ENCODE measurements at regions of chr20 and their contacts with region 1.

Region 1: DNA sequence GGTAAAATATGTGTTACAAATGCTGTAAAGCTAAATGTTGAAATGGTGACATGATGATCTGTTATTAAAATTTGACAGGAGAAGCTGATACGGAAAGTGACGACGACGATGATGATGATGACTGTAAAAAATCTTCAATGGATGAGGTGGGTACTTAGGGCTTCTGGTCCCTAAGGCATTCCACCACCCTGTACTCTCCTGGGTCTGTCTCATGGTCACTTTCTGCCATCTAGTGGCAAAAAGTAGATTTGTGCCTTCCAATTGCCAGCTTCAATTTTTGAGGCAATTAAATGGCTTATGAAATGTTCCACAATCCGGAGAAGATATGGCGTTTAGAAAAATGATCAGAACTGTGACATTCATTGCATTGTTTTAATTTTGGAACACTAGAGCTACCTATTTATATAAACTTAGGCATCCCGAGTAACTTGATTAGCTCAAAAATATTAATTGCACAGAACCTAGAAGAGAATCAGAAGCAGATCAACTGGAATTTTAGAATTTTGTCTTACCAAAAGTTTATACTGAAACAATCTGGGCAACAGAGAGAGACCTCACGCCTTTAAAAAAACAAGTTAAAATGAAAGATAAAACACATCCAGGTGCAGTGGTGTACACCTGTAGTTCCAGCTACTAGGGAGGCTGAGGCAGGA is 346.5 kb upstream of the PLCB4 start:
- DNase-seq: peak; percentile 22
- ATAC-seq: peak; percentile 86
- H3K4me3 Mint-ChIP-seq: no peak overlapping the region
- H3K27ac Mint-ChIP-seq: no peak overlapping the region
- H3K4me1 Mint-ChIP-seq: no peaks in the 10 kb centered on the region
- H3K27me3 Mint-ChIP-seq: no peaks in the 10 kb centered on the region
- CTCF ChIP-seq: peak; percentile 69

Region 2: GRCh38 chr20:7935027-7935551 is 787.3 kb before region 1 on chr20:
- CTCF ChIA-PET with region 1: interaction called, 37 read pairs
- POLR2A ChIA-PET with region 1: interaction called, 6 read pairs
- DNase-seq: no peak
- ATAC-seq: no peak
- H3K4me3 Mint-ChIP-seq: no peak overlapping the region
- H3K27ac Mint-ChIP-seq: no peak overlapping the region
- H3K4me1 Mint-ChIP-seq: peaks cover 4% of the 10 kb centered on the region; the same call in 1 of the 2 replicates
- H3K27me3 Mint-ChIP-seq: no peaks in the 10 kb centered on the region
- CTCF ChIP-seq: no peak

Region 3: GRCh38 chr20:7980332-7981046 is 741.9 kb before region 1 on chr20:
- CTCF ChIA-PET with region 1: interaction called, 24 read pairs
- POLR2A ChIA-PET with region 1: no interaction called
- DNase-seq: peak; percentile 17
- ATAC-seq: peak; percentile 46; the same call in 1 of the 2 replicates
- H3K4me3 Mint-ChIP-seq: no peak overlapping the region; the same call in 1 of the 2 replicates
- H3K27ac Mint-ChIP-seq: no peak overlapping the region
- H3K4me1 Mint-ChIP-seq: peaks cover 22% of the 10 kb centered on the region
- H3K27me3 Mint-ChIP-seq: peaks cover 28% of the 10 kb centered on the region
- CTCF ChIP-seq: 0 out of 2 replicates have a peak, but pooled peaks have one; percentile 41

Region 4: DNA sequence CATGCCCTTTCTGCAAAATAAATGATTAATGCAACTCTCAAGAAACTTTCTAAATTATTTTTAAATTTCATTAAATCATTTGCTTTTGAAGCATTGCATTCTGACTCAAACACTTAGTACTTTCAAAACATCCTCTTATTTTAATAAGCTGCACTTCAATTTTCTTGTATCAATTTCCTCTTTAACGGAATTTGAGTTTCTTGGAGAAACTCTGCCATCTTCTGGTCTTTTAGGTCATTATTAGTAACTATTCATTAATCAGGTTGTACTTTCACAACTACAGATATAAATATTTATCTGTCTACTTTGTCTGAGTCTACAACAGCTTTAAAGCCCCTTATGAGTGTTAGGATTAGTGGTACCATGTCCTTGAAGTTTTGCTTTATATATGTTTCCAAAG is 733.0 kb before region 1 on chr20:
- CTCF ChIA-PET with region 1: interaction called, 24 read pairs
- POLR2A ChIA-PET with region 1: no interaction called
- DNase-seq: no peak
- ATAC-seq: no peak
- H3K4me3 Mint-ChIP-seq: no peak overlapping the region
- H3K27ac Mint-ChIP-seq: no peak overlapping the region
- H3K4me1 Mint-ChIP-seq: peaks cover 6% of the 10 kb centered on the region
- H3K27me3 Mint-ChIP-seq: peaks cover 11% of the 10 kb centered on the region
- CTCF ChIP-seq: no peak

Region 5: DNA sequence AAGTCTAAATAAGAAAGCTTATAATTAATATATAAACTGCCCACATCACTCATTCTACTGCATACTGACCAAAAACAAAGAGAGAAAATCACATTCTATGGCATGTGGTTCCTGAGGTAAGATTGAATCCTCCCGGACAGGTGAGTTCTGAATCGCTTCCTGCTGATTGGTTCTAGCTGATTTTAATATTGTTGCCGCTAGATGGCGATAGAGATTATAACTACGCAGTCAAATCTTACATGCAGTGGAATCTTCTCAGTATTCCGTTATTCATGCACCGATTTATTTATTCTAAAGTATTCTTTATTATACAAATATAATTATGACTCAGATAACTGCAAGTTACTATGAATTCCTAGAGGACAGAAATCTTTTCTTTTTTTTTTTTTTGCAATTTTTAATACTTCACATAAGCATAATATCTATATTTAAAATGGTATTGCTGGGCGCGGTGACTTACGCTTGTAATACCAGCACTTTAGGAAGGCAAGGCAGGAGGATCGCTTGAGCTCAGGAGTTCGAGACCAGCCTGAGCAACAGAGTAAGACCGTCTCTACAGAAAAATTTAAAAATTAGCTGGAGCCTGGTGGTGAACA is 678.6 kb before region 1 on chr20:
- CTCF ChIA-PET with region 1: interaction called, 51 read pairs
- POLR2A ChIA-PET with region 1: interaction called, 3 read pairs
- DNase-seq: no peak
- ATAC-seq: peak; percentile 76
- H3K4me3 Mint-ChIP-seq: no peak overlapping the region
- H3K27ac Mint-ChIP-seq: no peak overlapping the region
- H3K4me1 Mint-ChIP-seq: no peaks in the 10 kb centered on the region
- H3K27me3 Mint-ChIP-seq: no peaks in the 10 kb centered on the region; the same call in 1 of the 2 replicates
- CTCF ChIP-seq: peak; percentile 54

Region 6: DNA sequence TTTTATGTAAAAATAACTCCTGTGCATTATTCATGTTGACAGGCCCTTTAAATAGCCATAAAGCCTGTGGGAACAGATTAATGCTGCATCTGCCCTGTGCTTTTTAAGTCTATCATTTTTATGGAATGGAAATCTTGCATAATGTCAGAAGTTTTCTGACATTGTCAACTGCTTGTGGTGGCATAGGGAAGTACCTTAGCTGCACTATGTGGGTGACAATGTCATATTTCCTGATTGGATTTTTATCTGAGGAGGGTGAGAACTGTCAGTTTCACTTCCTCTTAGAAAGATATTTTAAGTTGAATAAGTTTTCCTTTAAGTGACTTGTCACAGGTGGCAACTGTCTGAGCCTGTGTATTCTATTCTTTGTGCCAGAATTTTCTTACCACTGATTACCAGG is 322.5 kb before region 1 on chr20:
- CTCF ChIA-PET with region 1: interaction called, 14 read pairs
- POLR2A ChIA-PET with region 1: no interaction called
- DNase-seq: no peak
- ATAC-seq: no peak
- H3K4me3 Mint-ChIP-seq: no peak overlapping the region
- H3K27ac Mint-ChIP-seq: no peak overlapping the region
- H3K4me1 Mint-ChIP-seq: no peaks in the 10 kb centered on the region
- H3K27me3 Mint-ChIP-seq: no peaks in the 10 kb centered on the region
- CTCF ChIP-seq: no peak

Region 7: DNA sequence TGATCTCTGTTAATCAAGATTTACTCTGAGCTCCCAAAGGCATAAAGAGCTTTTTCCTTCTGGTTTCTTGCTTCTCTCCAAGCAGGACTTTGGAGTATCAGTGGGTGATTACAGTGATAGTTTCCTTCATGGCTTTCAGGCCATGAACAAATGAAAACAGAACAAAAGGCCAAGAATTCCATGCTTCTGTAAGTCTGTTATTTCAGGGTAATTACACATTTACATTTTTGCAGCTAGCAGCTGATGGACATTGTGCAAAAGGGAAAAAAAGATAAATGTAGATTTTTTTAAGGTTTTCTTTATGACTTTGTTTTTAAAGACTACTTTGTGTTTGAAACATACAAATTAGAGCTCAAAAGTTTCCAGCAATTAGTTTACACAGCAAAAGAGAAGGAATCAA is 148.7 kb before region 1 on chr20:
- CTCF ChIA-PET with region 1: no interaction called
- POLR2A ChIA-PET with region 1: no interaction called
- DNase-seq: no peak
- ATAC-seq: no peak
- H3K4me3 Mint-ChIP-seq: no peak overlapping the region
- H3K27ac Mint-ChIP-seq: no peak overlapping the region
- H3K4me1 Mint-ChIP-seq: peaks cover 7% of the 10 kb centered on the region
- H3K27me3 Mint-ChIP-seq: no peaks in the 10 kb centered on the region
- CTCF ChIP-seq: no peak

Region 8: DNA sequence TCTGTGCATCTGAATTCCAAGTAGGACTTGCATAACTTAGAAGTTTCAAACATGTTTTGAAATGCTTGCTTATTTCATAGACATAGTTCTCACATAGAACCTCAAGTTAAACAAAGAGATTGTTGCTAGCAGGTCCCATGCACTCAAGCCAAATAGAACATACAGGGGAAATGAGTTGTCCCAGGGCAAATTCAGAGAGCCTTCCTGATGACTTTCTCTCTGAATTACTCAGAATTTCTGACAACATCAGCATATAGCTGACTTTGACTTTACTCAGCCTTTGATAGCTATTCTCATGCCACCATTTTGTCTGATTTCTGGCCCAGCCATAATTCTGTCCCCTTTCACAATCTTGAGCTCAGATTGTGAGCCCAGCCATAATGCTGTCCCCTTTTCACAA is 13.3 kb after region 1 on chr20:
- CTCF ChIA-PET with region 1: interaction called, 11 read pairs
- POLR2A ChIA-PET with region 1: no interaction called
- DNase-seq: no peak
- ATAC-seq: no peak
- H3K4me3 Mint-ChIP-seq: no peak overlapping the region
- H3K27ac Mint-ChIP-seq: no peak overlapping the region
- H3K4me1 Mint-ChIP-seq: no peaks in the 10 kb centered on the region
- H3K27me3 Mint-ChIP-seq: no peaks in the 10 kb centered on the region
- CTCF ChIP-seq: no peak